Activated CD4-positive, alpha-beta T cell treated with anti-CD3 and anti-CD28 coated beads for 36 hours (primary cell): ENCODE measurements at regions of chr14 and their contacts with region 1.

Region 1: GRCh38 chr14:102516531-102517415 is 7.2 kb upstream of the ANKRD9 start:
- DNase-seq: peak; percentile 76
- ATAC-seq: peak; percentile 85
- H3K4me3 Mint-ChIP-seq: peak overlapping the region; percentile 68
- H3K27ac Mint-ChIP-seq: no peak overlapping the region
- H3K4me1 Mint-ChIP-seq: peaks cover 3% of the 10 kb centered on the region
- H3K27me3 Mint-ChIP-seq: peaks cover 8% of the 10 kb centered on the region

Region 2: GRCh38 chr14:102235275-102235897 is 281.4 kb before region 1 on chr14:
- CTCF ChIA-PET with region 1: no interaction called
- POLR2A ChIA-PET with region 1: no interaction called
- intact Hi-C with region 1: loop called in 1 of 2 experiments (anchors 2 kb)
- DNase-seq: peak; percentile 91
- ATAC-seq: peak; percentile 100
- H3K4me3 Mint-ChIP-seq: no peak overlapping the region
- H3K27ac Mint-ChIP-seq: no peak overlapping the region
- H3K4me1 Mint-ChIP-seq: no peaks in the 10 kb centered on the region
- H3K27me3 Mint-ChIP-seq: no peaks in the 10 kb centered on the region

Region 3: DNA sequence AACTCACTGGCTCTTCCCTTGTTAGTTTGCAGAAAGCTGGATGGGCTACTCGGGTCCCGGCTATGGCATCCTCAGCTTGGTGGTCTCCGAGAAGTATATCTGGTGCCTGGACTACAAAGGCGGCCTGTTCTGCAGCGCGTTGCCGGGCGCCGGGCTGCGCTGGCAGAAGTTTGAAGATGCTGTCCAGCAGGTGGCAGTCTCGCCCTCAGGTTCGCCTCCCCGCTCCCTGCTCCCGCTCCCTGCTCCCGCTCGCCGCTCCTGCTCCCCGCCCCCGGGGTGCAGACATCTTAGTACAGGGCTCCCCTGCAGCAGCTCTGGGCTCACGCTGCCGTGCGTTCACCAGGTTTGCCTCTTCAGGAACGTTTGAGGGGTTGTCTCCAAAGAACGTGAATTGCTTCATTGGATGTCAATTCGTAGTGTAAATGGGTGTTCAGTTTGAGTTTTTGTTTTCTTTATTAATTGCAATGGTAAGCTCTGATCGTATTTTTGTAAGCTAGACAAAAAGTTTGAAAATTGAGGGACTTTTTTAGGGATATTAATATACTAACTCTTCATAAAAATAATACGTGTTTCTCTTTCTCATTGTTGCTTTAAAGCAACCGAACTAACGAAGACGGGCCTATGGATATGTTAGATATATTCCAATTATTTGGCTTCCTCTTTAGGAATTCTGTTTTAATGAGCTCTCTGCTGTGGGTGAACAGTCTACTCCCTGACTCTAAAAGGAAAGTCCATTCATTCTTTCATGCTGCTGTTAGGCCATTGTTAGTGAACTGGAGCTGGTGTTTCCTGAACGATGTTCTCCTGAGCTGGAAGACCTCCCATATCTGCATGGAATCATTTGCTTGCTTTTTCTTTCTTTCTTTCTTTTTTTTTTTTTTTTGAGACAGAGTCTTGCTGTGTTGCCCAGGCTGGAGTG is 78.5 kb before region 1 on chr14:
- CTCF ChIA-PET with region 1: interaction called, 17 read pairs
- POLR2A ChIA-PET with region 1: no interaction called
- intact Hi-C with region 1: loop called (anchors 1 kb)
- DNase-seq: peak; percentile 83
- ATAC-seq: peak; percentile 81
- H3K4me3 Mint-ChIP-seq: no peak overlapping the region
- H3K27ac Mint-ChIP-seq: no peak overlapping the region
- H3K4me1 Mint-ChIP-seq: no peaks in the 10 kb centered on the region
- H3K27me3 Mint-ChIP-seq: no peaks in the 10 kb centered on the region

Region 4: GRCh38 chr14:103185051-103185992 is 668.5 kb after region 1 on chr14:
- CTCF ChIA-PET with region 1: no interaction called
- POLR2A ChIA-PET with region 1: no interaction called
- intact Hi-C with region 1: no loop called
- DNase-seq: no peak
- ATAC-seq: no peak
- H3K4me3 Mint-ChIP-seq: no peak overlapping the region
- H3K27ac Mint-ChIP-seq: no peak overlapping the region
- H3K4me1 Mint-ChIP-seq: peaks cover 3% of the 10 kb centered on the region
- H3K27me3 Mint-ChIP-seq: peaks cover 40% of the 10 kb centered on the region